MCF 10A (cell line): ENCODE measurements at regions of chr4 and their contacts with region 1.

Region 1: GRCh38 chr4:74338792-74339333 is 26.1 kb upstream of the EREG start:
- DNase-seq: peak; percentile 79
- H3K4me3 Mint-ChIP-seq: no peak overlapping the region
- H3K27ac Mint-ChIP-seq: peak overlapping the region; percentile 26
- H3K4me1 Mint-ChIP-seq: peaks cover 12% of the 10 kb centered on the region
- H3K27me3 Mint-ChIP-seq: no peaks in the 10 kb centered on the region
- CTCF ChIP-seq: no peak

Region 2: GRCh38 chr4:74258963-74259362 is 79.9 kb before region 1 on chr4:
- CTCF ChIA-PET with region 1: no interaction called
- POLR2A ChIA-PET with region 1: no interaction called
- intact Hi-C with region 1: no loop called
- DNase-seq: peak; percentile 21
- H3K4me3 Mint-ChIP-seq: no peak overlapping the region
- H3K27ac Mint-ChIP-seq: no peak overlapping the region
- H3K4me1 Mint-ChIP-seq: peaks cover 10% of the 10 kb centered on the region
- H3K27me3 Mint-ChIP-seq: no peaks in the 10 kb centered on the region
- CTCF ChIP-seq: no peak

Region 3: GRCh38 chr4:74327762-74328161 is 11.1 kb before region 1 on chr4:
- CTCF ChIA-PET with region 1: interaction called, 3 read pairs
- POLR2A ChIA-PET with region 1: interaction called, 10 read pairs
- intact Hi-C with region 1: no loop called
- DNase-seq: no peak
- H3K4me3 Mint-ChIP-seq: peak overlapping the region; percentile 16
- H3K27ac Mint-ChIP-seq: peak overlapping the region; percentile 69
- H3K4me1 Mint-ChIP-seq: peaks cover 20% of the 10 kb centered on the region
- H3K27me3 Mint-ChIP-seq: no peaks in the 10 kb centered on the region
- CTCF ChIP-seq: no peak